ENCODE measurements at regions of chr5 and their contacts with region 1.

Region 1: DNA sequence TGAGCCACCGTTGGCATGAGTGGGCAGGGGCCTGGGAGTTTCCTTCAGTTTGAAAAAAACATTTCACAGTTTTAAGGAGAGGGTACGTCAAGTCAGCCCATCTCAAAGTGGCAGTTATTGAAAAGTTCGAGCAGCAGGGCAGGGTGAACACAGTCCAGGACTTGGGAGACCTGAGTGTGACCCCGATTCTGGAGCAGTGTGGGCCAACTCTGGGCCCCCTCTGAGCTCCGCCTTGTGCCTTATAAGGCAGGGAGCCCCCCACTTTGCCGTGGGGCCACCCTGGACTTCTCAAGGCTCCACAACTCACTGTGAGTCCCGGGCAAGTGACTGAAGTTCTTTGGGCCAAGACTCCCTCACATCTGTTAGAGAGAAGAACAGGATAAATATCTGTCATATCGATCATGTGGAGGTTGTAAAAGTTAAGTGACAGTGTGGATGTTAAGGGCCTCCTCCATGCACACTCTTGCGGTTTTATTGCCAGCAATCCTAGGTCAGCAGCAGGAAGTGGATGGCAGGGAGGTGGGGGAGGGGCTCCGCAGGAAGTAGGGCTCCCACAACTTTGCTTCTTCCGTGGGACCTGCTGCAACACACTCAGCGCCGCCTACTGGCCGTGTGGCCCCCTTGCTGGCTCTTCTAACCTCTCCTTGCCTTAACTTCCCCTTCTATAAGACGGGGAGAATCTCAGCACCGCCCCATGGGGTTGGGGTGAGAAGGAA is 38.4 kb downstream of the HRH2 start:
- DNase-seq: peak; percentile 50 to 77 (median 73)
- ATAC-seq: peak; percentile 86
- H3K4me3 ChIP-seq: peak overlapping the region; percentile 10
- H3K4me3 Mint-ChIP-seq: peak overlapping the region; percentile 25 to 81 (median 67)
- H3K27ac ChIP-seq: peak overlapping the region; percentile 38
- H3K27ac Mint-ChIP-seq: peak overlapping the region; percentile 72 to 92 (median 87)
- H3K4me1 ChIP-seq: peaks cover 8 to 11% of the 10 kb centered on the region in 2 donors
- H3K4me1 Mint-ChIP-seq: peaks cover 31 to 56% (median 53%) of the 10 kb centered on the region in 7 donors
- H3K27me3 ChIP-seq: no peaks in the 10 kb centered on the region
- H3K27me3 Mint-ChIP-seq: no peaks in the 10 kb centered on the region

Region 2: DNA sequence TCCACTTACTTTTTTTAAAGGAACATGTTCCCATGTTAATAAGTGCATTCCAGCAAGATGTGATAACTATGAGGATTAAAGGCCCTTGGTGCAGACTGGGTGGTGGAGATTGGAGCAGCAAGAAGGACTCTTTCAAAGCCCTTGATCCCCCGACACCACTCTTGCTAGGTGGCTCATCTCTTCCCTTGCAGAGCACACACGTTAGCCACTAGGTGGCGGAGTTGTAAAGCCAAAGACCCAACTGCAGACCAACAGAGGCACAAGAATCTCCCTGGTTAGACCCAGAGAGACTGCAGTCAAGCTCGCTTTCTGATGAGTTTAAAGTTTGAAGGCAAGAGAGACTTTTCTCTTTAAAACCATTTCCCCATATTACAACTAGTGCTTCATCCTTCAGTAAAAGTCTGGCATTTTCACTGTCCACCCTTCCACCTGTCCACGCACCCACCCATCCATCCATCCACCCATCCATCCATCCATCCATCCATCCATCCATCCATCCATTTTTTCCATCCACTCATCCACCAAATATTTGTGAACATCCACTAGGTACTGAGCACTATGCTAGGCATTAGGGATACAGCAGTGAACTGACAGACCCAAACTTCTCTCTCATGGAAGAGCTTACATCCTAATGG is 745.0 kb before region 1 on chr5:
- CTCF ChIA-PET with region 1: no interaction called
- POLR2A ChIA-PET with region 1: no interaction called
- intact Hi-C with region 1: loop called in 1 of 2 experiments (anchors 1 kb)
- DNase-seq: peak in 8 of 9 donors; percentile 6 to 60 (median 46)
- ATAC-seq: peak; percentile 68
- H3K4me3 ChIP-seq: no peak overlapping the region
- H3K4me3 Mint-ChIP-seq: no peak overlapping the region
- H3K27ac ChIP-seq: no peak overlapping the region
- H3K27ac Mint-ChIP-seq: peak overlapping the region in 1 of 9 donors; percentile 28
- H3K4me1 ChIP-seq: no peaks in the 10 kb centered on the region
- H3K4me1 Mint-ChIP-seq: no peaks in the 10 kb centered on the region
- H3K27me3 ChIP-seq: no peaks in the 10 kb centered on the region
- H3K27me3 Mint-ChIP-seq: peaks cover 0 to 23% (median 13%) of the 10 kb centered on the region in 5 donors

Region 3: GRCh38 chr5:175478384-175479124 is 217.7 kb before region 1 on chr5 and contains the start of gene SFXN1:
- CTCF ChIA-PET with region 1: no interaction called
- POLR2A ChIA-PET with region 1: no interaction called
- intact Hi-C with region 1: loop called in 1 of 2 experiments (anchors 2 kb)
- DNase-seq: peak; percentile 56 to 90 (median 76)
- ATAC-seq: peak; percentile 82
- H3K4me3 ChIP-seq: peak within 1 kb of the TSS; percentile 93
- H3K4me3 Mint-ChIP-seq: peak within 1 kb of the TSS; percentile 95 to 98 (median 98)
- H3K27ac ChIP-seq: peak within 1 kb of the TSS; percentile 72
- H3K27ac Mint-ChIP-seq: peak within 1 kb of the TSS; percentile 71 to 98 (median 95)
- H3K4me1 ChIP-seq: peaks cover 29 to 34% of the 10 kb centered on the region in 2 donors
- H3K4me1 Mint-ChIP-seq: peaks cover 33 to 64% (median 54%) of the 10 kb centered on the region in 7 donors
- H3K27me3 ChIP-seq: no peaks in the 10 kb centered on the region
- H3K27me3 Mint-ChIP-seq: peaks cover 0 to 19% (median 4%) of the 10 kb centered on the region in 5 donors
- total RNA-seq, gene SFXN1: 58.7 to 177 (median 88.9) TPM

Region 4: DNA sequence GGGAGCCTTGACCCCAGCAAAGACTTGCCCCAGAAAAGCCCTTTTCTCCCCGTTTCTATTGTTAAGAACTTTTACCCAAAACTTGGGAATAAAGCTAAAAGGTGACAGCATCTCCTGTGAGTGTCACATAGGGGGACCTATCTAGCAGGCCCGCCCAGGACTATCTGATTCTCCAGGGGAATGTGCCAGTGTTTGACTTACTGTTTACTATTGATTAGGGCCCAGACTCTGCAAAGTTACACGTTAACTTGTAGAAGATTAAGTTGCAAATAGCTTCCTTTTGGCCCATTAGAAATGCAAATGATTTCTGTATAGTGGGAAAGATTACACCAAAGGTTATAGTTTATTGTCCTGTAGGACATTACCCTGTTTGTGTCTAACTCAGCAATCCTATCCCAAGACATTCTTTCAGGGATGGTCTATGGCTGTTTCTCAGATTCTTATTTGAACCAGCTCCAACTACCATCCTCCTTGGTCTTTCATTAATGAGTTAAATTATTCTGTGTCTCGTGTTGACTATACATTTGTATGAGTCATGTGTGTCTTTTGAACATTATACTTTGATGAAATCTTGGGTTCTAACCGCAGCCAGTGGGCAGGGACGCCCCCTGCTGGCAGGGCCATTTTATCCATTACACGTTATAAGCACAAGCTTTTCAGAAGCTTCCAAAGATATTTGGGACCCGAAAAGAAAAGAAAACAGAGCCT is 22.3 kb after region 1 on chr5:
- CTCF ChIA-PET with region 1: interaction called, 17 read pairs
- POLR2A ChIA-PET with region 1: no interaction called
- intact Hi-C with region 1: loop called in 1 of 2 experiments (anchors 2 kb)
- DNase-seq: peak; percentile 18 to 63 (median 45)
- ATAC-seq: peak; percentile 71
- H3K4me3 ChIP-seq: no peak overlapping the region
- H3K4me3 Mint-ChIP-seq: no peak overlapping the region
- H3K27ac ChIP-seq: no peak overlapping the region
- H3K27ac Mint-ChIP-seq: peak overlapping the region in 1 of 9 donors; percentile 44
- H3K4me1 ChIP-seq: no peaks in the 10 kb centered on the region
- H3K4me1 Mint-ChIP-seq: peaks cover 0 to 10% (median 4%) of the 10 kb centered on the region in 7 donors
- H3K27me3 ChIP-seq: no peaks in the 10 kb centered on the region
- H3K27me3 Mint-ChIP-seq: peaks cover 0 to 3% (median 0%) of the 10 kb centered on the region in 5 donors

Measured in naive thymus-derived CD4-positive, alpha-beta T cell (primary cell).